ENCODE measurements at regions of chr11 and their contacts with region 1.

Region 1: GRCh38 chr11:114262681-114263512 is 33.3 kb upstream of the NNMT start:
- DNase-seq: no peak
- ATAC-seq: peak; percentile 23

Region 2: DNA sequence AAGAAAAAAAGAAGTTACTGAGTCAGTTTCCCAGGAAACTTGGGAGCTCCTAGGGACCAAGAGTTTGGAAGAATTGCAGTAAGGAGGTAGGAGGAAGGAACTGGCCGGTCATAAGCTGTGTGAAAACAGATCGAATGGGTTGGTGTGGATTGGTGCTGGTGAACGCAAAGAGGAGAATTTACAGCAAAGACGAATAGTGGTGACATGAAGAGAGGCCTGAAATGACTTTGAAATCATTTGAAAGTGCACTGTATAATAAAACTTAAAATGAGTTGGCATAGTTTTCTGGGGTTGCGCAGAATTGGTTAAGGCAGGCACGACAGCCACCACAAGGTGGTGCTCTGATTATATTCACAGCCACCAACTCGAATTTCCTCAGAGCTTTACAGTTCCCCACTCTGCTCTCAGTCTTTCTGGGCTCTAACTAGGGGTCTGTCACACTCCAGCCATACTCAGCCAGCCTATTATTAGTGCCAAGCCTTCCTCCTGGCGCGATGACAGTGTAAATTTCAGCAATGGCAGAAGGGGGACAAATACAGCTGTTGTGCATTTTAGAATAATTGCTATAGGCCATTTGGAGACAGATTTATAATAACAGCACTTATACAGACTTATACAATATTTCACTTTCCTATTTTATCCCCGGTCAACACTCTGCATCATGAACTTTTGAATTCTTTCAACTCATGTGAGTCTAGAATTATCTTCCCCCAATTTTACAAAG is 366.6 kb before region 1 on chr11:
- intact Hi-C with region 1: loop called (anchors 5 kb)
- DNase-seq: peak; percentile 54
- ATAC-seq: peak; percentile 76

Region 3: GRCh38 chr11:113994077-113994954 is 268.6 kb before region 1 on chr11:
- intact Hi-C with region 1: loop called (anchors 2 kb)
- DNase-seq: no peak
- ATAC-seq: peak; percentile 59

Region 4: DNA sequence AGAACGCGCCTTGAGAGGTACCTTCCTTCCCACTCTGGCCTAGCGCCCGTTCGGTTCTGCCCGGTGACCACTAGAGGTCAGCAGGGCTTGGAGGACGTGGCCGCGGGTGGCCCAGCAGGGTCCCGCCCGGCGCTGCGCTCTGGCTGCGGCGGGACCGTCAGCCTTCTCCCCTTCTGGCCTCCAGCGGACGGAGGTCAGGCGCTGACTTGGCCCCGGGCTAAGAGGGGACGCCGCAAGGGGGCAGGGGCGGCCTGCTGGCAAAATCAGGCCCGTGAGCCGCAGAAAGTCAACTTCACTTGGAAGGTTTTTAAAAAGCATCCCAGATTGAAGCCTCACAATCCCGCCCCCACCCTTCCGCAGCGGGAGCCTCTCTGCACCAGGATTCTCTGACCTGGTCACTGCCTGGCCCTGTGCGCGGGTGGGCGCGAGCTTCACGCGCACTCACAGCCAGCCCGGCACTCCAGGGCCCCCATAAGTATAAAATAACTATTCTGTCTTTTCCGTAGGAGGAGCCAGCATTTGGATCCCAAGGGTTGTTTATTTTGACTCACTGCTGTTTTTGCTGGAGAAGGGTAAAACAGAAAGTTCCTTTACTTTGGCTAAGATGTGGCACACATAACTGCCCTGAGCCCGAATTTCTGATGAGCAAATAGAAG is 226.6 kb before region 1 on chr11:
- intact Hi-C with region 1: loop called (anchors 5 kb)
- DNase-seq: peak; percentile 93
- ATAC-seq: peak; percentile 94

Region 5: GRCh38 chr11:114719562-114719961 is 456.7 kb after region 1 on chr11:
- intact Hi-C with region 1: no loop called
- DNase-seq: no peak
- ATAC-seq: no peak